ENCODE measurements at regions of chr6 and their contacts with region 1.

Region 1: GRCh38 chr6:5287205-5287965 is 26.1 kb downstream of the FARS2 start:
- DNase-seq: peak in 2 of 5 donors; percentile 22 to 36
- ATAC-seq: peak; percentile 52 to 83 (median 71)
- H3K4me3 ChIP-seq: peak overlapping the region in 3 of 12 donors; percentile 10 to 26 (median 19)
- H3K27ac ChIP-seq: peak overlapping the region; percentile 24 to 73 (median 48)
- H3K4me1 ChIP-seq: peaks cover 0 to 23% (median 12%) of the 10 kb centered on the region in 12 donors
- H3K27me3 ChIP-seq: no peaks in the 10 kb centered on the region
- CTCF ChIP-seq: no peak
- POLR2A ChIP-seq: no peak

Region 2: GRCh38 chr6:5379647-5380242 is 92.4 kb after region 1 on chr6:
- intact Hi-C with region 1: loop called in 1 of 10 experiments (anchors 10 kb)
- DNase-seq: no peak
- ATAC-seq: no peak
- H3K4me3 ChIP-seq: no peak overlapping the region
- H3K27ac ChIP-seq: no peak overlapping the region
- H3K4me1 ChIP-seq: peaks cover 0 to 7% (median 0%) of the 10 kb centered on the region in 12 donors
- H3K27me3 ChIP-seq: no peaks in the 10 kb centered on the region
- CTCF ChIP-seq: peak in 7 of 12 donors; percentile 15 to 56 (median 24)
- POLR2A ChIP-seq: no peak

Region 3: GRCh38 chr6:6246544-6246943 is 959.2 kb after region 1 on chr6:
- intact Hi-C with region 1: no loop called
- DNase-seq: no peak
- ATAC-seq: no peak
- H3K4me3 ChIP-seq: no peak overlapping the region
- H3K27ac ChIP-seq: no peak overlapping the region
- H3K4me1 ChIP-seq: no peaks in the 10 kb centered on the region
- H3K27me3 ChIP-seq: peaks cover 0 to 13% (median 0%) of the 10 kb centered on the region in 9 donors
- CTCF ChIP-seq: no peak
- POLR2A ChIP-seq: no peak

Measured in heart left ventricle (tissue), 16 donors.